ENCODE measurements at regions of chr12 and their contacts with region 1.

Region 1: DNA sequence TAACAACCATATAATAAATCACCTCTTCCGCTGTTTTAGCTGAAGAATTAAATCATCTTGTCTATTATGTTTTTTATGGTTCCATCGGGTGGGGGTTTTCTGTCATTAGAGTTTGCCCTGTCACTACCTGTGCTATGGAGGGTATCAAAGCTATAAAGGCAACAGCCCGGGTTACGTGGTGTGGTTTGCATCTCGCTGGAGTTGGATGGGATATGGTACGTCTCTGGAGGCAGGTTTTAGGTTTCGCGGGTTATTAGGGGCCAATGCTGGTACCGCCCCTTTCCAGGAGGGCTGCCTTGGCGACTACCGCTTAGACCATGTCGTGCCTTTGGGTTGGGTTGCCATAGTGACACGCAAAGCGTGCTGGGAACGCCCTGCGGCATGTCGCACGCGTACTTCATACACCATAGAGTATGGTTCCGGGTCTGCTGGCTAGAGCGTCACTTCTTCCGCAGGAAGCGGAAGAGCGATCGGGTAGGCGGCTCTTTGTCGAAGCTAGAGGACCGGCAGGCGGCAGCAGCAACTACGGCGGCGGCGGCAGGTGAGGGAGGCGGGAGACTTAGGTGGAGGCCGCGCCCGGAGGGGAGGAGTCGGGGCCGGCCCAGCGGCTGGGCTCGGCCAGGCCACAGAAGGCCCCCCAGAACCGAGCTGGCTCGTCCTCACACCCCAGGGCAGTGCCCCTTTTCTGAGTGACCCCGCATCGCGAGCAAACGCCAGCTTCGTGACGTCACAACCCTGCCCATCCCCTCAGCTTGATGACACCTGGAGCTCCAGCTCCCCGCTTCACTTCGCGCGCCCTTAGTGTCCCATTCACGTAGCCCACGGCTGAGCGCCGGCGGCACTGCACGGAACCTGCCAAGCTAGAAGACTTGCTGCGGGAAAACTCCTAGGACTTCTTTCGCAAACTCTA is at the start of gene ZC3H10:
- DNase-seq: peak; percentile 98
- H3K4me3 ChIP-seq: peak within 1 kb of the TSS; percentile 72
- H3K27me3 ChIP-seq: no peaks in the 10 kb centered on the region
- CTCF ChIP-seq: peak; percentile 73
- polyA plus RNA-seq, gene ZC3H10: 1.4 and 1.6 TPM in 2 replicates

Region 2: GRCh38 chr12:55940065-55940732 is 177.8 kb before region 1 on chr12:
- CTCF ChIA-PET with region 1: no interaction called
- POLR2A ChIA-PET with region 1: interaction called, 12 read pairs
- DNase-seq: no peak
- H3K4me3 ChIP-seq: no peak overlapping the region
- H3K27me3 ChIP-seq: no peaks in the 10 kb centered on the region
- CTCF ChIP-seq: peak; percentile 95

Region 3: DNA sequence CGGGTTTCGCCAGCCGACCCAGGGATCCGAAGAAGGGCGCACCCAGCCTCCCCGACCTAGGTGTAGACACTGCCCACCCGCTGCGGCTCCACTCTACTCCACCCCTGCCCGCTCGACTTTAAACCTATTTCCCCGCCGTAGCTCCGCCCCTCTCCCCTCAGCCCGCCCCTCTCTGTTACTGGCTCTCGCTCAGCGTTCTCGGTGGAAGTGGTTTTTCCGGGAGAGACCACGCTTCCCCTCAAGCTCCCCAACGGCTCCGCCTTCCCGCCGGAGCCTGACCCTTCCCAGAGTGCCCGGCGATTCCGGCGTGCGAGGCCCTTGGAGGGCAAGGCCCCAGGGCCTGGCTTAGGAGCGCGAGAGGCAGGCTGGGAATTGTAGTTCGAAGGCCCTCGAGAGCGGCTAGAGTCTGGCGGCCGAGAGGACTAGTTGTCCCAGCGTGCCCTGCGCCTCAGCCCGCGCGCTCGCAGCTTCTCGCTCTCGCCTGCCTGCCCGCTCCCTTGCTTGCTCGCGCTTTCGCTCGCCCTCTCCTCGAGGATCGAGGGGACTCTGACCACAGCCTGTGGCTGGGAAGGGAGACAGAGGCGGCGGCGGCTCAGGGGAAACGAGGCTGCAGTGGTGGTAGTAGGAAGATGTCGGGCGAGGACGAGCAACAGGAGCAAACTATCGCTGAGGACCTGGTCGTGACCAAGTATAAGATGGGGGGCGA is 13.8 kb before region 1 on chr12 and contains the start of gene PA2G4:
- CTCF ChIA-PET with region 1: interaction called, 8 read pairs
- POLR2A ChIA-PET with region 1: interaction called, 13 read pairs
- DNase-seq: peak; percentile 97
- H3K4me3 ChIP-seq: peak within 1 kb of the TSS; percentile 94
- H3K27me3 ChIP-seq: no peaks in the 10 kb centered on the region
- CTCF ChIP-seq: no peak
- polyA plus RNA-seq, gene PA2G4: 134 and 215 TPM in 2 replicates

Region 4: DNA sequence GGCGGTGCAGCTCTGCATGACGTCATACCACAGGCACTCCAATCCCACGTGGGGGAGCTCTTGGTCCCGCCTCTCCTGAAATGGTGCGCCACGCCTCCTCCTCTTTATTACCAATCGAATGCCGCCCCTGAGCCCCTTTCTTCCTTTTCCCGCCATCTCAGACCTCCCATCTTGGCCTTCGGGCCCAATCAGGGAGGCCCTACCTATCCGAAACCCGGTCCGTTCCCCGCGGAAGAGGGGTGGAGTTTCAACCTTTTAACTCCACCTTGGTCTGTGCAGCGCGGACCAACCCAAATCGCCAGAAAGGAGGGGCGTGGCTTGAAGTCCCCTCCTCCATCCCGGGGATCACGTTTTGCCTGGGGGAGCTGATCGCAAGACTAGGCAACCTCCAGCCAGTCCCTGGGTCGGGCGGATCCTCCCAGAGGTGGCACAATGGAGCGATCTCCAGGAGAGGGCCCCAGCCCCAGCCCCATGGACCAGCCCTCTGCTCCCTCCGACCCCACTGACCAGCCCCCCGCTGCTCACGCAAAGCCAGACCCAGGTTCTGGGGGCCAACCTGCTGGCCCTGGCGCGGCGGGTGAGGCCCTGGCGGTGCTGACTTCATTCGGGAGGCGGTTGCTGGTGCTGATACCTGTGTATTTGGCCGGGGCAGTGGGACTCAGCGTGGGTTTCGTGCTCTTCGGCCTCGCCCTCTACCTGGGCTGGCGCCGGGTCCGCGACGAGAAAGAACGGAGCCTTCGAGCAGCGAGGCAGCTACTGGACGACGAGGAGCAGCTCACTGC is 10.0 kb after region 1 on chr12 and contains the start of gene ESYT1:
- CTCF ChIA-PET with region 1: interaction called, 30 read pairs
- POLR2A ChIA-PET with region 1: interaction called, 8 read pairs
- DNase-seq: peak; percentile 99
- H3K4me3 ChIP-seq: peak within 1 kb of the TSS; percentile 90
- H3K27me3 ChIP-seq: no peaks in the 10 kb centered on the region
- CTCF ChIP-seq: 0 out of 2 replicates have a peak, but pooled peaks have one; percentile 20
- polyA plus RNA-seq, gene ESYT1: 180 and 264 TPM in 2 replicates

Region 5: DNA sequence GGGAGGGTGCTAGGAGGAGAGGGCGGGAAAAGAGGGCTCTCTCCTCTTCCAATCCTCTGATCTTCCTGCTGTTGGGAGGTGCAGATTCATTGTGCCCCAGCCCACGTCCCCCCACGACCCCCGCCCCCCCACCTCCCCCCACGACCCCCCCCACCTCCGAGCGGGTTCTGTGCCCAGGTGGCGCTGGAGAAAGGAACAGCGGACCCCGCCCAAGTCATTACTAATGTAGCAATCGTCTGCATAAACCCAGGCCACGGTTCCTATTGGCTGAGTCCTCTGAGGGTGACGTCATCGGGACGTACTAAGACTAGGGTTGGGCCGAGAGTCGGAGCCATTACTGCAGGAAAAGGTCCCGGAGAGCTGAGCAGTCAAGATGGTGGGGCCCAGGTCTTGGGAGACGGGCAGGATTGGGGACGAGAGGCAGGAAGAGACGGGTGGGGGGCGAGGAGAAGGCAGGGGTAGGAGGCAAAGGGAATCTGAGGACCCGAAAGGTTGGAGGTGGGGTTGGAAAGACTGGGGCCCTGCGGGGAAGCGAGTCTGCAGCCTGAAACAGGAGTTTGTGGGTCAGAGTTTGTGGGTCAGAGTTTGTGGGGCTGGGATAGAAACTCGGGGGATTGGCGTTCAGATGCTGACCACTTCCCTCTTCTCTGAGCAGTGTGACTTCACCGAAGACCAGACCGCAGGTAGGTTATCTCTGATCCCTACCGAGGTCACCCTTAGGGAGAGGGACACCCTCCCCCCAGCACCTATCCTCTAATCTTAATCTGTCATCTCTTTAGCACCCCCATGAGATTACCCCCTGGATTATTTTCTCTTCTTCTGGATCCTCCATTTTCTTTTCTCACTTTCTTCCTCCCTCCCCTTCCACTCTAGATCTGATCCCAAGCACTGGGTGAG is 40.2 kb after region 1 on chr12 and contains the start of gene MYL6:
- CTCF ChIA-PET with region 1: interaction called, 52 read pairs
- POLR2A ChIA-PET with region 1: interaction called, 6 read pairs
- DNase-seq: peak; percentile 85
- H3K4me3 ChIP-seq: peak within 1 kb of the TSS; percentile 64
- H3K27me3 ChIP-seq: no peaks in the 10 kb centered on the region
- CTCF ChIP-seq: no peak
- polyA plus RNA-seq, gene MYL6: 5,667 and 6,879 TPM in 2 replicates

Region 6: GRCh38 chr12:56224102-56224701 is 106.2 kb after region 1 on chr12 and contains the start of gene NABP2:
- CTCF ChIA-PET with region 1: interaction called, 31 read pairs
- POLR2A ChIA-PET with region 1: interaction called, 8 read pairs
- DNase-seq: peak; percentile 91
- H3K4me3 ChIP-seq: peak within 1 kb of the TSS; percentile 85
- H3K27me3 ChIP-seq: no peaks in the 10 kb centered on the region
- CTCF ChIP-seq: peak; percentile 82
- polyA plus RNA-seq, gene NABP2: 47.5 and 52.0 TPM in 2 replicates